ENCODE measurements at regions of chr14 and their contacts with region 1.

Region 1: GRCh38 chr14:77314043-77314442 is 6.6 kb downstream of the POMT2 start:
- DNase-seq: no peak
- ATAC-seq: no peak
- H3K4me3 Mint-ChIP-seq: no peak overlapping the region
- H3K27ac Mint-ChIP-seq: no peak overlapping the region
- H3K4me1 Mint-ChIP-seq: no peaks in the 10 kb centered on the region
- H3K27me3 Mint-ChIP-seq: no peaks in the 10 kb centered on the region

Region 2: DNA sequence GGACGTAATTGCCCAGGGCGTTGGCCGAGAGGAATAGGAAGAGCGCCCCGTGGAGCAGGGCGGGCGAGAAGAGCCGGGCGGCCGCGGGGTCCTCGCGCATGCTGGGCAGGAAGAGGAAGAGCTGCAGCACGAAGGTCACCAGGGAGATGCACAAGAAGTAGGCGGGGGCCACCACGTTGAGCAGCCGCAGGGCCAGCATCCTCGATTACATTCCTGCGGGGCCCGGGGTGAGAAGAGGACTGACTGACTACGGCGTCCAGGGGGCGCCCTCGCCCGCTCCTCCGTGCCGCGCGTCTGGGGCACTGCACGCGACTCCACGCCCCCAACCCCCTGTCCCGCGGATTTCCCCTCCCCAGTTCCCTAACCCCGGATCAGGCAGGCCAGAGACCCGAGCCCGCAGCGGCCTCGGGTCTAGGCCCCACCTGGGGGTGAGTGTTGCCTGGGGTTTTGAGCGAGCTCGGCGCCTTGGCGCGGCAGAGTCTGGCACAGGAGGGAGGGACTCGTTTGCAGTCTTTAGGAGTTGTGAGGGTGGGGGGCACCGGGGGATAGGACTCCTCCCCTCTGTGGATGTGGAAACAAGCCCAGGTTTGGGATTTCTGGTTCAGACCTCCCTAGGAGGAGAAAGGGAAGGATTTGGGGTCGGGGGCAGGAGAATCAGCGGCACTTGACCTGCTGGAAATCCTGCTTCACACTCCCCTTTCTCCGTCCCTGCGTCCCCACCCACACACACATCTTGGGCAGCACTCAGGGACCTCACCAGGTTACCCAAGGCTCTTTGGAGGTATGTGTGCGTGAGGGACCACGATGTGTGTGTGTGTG is 174.3 kb before region 1 on chr14:
- CTCF ChIA-PET with region 1: interaction called, 5 read pairs
- POLR2A ChIA-PET with region 1: no interaction called
- intact Hi-C with region 1: loop called in 1 of 2 experiments (anchors 2 kb)
- DNase-seq: peak; percentile 79
- ATAC-seq: peak; percentile 92
- H3K4me3 Mint-ChIP-seq: no peak overlapping the region
- H3K27ac Mint-ChIP-seq: no peak overlapping the region
- H3K4me1 Mint-ChIP-seq: peaks cover 15% of the 10 kb centered on the region
- H3K27me3 Mint-ChIP-seq: peaks cover 64% of the 10 kb centered on the region

Region 3: GRCh38 chr14:77151918-77152588 is 162.0 kb before region 1 on chr14:
- CTCF ChIA-PET with region 1: interaction called, 73 read pairs
- POLR2A ChIA-PET with region 1: no interaction called
- intact Hi-C with region 1: loop called (anchors 1 kb)
- DNase-seq: no peak
- ATAC-seq: peak; percentile 69
- H3K4me3 Mint-ChIP-seq: no peak overlapping the region
- H3K27ac Mint-ChIP-seq: no peak overlapping the region
- H3K4me1 Mint-ChIP-seq: no peaks in the 10 kb centered on the region
- H3K27me3 Mint-ChIP-seq: peaks cover 34% of the 10 kb centered on the region

Region 4: GRCh38 chr14:77278461-77279230 is 35.4 kb before region 1 on chr14:
- CTCF ChIA-PET with region 1: interaction called, 4 read pairs
- POLR2A ChIA-PET with region 1: no interaction called
- intact Hi-C with region 1: loop called in 1 of 2 experiments (anchors 1 kb)
- DNase-seq: peak; percentile 15
- ATAC-seq: no peak
- H3K4me3 Mint-ChIP-seq: no peak overlapping the region
- H3K27ac Mint-ChIP-seq: no peak overlapping the region
- H3K4me1 Mint-ChIP-seq: no peaks in the 10 kb centered on the region
- H3K27me3 Mint-ChIP-seq: no peaks in the 10 kb centered on the region

Region 5: DNA sequence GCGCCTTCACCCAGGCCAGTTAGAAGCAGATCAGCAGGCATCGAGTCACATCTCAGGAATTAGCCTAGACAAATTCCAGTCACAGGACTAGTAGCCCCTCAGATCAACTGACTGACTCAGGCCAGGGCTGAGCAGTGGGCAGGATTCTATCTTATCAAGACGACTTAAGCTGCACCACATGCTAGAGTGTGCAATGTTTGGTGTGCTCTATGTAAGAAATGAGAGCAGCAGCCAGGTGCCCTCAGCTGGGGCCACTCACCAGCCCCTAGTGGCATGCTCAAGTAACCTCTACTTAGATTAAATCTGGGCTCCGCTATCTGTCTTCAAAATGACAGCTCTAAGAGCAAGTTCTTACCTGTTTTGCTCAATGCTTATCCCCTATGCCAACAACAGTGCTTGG is 23.3 kb before region 1 on chr14:
- CTCF ChIA-PET with region 1: interaction called, 10 read pairs
- POLR2A ChIA-PET with region 1: no interaction called
- intact Hi-C with region 1: no loop called
- DNase-seq: no peak
- ATAC-seq: no peak
- H3K4me3 Mint-ChIP-seq: no peak overlapping the region
- H3K27ac Mint-ChIP-seq: no peak overlapping the region
- H3K4me1 Mint-ChIP-seq: no peaks in the 10 kb centered on the region
- H3K27me3 Mint-ChIP-seq: no peaks in the 10 kb centered on the region

Region 6: GRCh38 chr14:77326167-77326566 is 12.1 kb after region 1 on chr14:
- CTCF ChIA-PET with region 1: interaction called, 12 read pairs
- POLR2A ChIA-PET with region 1: interaction called, 8 read pairs
- intact Hi-C with region 1: no loop called
- DNase-seq: no peak
- ATAC-seq: no peak
- H3K4me3 Mint-ChIP-seq: no peak overlapping the region
- H3K27ac Mint-ChIP-seq: no peak overlapping the region
- H3K4me1 Mint-ChIP-seq: peaks cover 11% of the 10 kb centered on the region
- H3K27me3 Mint-ChIP-seq: no peaks in the 10 kb centered on the region

Measured in activated CD4-positive, alpha-beta T cell treated with anti-CD3 and anti-CD28 coated beads for 36 hours (primary cell).